ENCODE measurements at regions of chr2 and their contacts with region 1.

Region 1: DNA sequence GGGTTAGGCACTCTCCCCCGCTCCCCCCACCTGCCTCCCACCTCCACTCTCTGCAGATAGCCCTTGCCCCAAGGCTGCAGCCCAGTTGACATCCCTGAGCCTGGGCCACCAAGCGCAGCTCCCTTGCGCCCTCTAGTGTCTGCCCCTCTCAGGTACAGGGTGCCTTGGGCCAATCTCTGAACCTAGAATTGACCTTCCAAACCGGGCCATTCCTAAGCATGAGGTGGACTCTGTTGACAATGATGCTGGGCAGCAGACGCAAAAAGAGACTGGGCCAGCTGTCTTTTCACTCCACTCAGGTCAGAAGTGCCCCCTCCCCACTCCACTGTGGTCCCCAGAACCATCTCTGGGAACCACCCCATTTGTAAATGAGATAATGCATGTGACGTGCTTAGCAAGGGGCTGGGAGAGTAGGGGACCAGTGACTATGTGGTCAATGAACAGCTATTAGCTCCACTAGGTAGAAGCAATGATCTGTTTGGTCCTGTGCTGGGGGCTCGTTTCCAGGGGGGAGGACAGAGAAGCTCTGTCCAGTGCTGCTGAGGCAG is 43.3 kb upstream of the PLB1 start:
- DNase-seq: peak; percentile 91
- H3K4me3 Mint-ChIP-seq: no peak overlapping the region
- H3K27ac Mint-ChIP-seq: no peak overlapping the region
- H3K4me1 Mint-ChIP-seq: peaks cover 36% of the 10 kb centered on the region
- H3K27me3 Mint-ChIP-seq: no peaks in the 10 kb centered on the region

Region 2: DNA sequence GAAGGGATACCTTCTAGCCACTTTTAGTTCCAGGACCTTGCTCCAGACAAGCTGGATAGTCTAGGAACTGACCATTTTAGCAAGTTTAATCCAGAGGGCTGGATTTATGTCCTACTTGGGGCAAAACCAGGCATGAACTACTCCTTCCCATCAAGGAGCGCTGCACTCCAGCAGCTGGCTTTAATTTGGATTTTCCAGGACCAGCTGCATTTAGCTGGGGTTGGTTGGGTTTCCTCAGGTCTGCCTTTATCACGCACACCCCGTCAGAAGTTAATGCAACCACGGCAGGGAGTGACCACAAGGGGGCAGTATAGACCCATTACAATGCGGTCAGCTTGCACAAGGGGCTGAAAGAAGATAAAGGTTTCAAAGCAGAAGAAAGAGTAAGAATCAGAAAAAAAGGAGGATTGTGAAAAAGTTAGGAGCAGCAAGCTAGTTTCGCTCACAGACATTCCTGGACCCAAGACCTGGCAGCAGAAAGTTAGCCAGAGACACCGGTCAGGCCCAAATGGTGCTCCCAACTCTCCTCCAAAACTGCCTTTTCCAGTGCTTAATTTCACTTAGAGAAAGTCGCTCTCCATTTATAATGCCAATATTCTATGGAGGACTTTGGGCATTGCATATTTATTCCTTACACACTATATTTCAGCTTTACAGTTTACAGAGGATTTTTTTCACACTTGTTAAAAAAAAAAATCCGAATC is 748.8 kb before region 1 on chr2:
- CTCF ChIA-PET with region 1: interaction called, 10 read pairs
- intact Hi-C with region 1: loop called (anchors 1 kb)
- DNase-seq: peak; percentile 95
- H3K4me3 Mint-ChIP-seq: no peak overlapping the region
- H3K27ac Mint-ChIP-seq: no peak overlapping the region
- H3K4me1 Mint-ChIP-seq: peaks cover 13% of the 10 kb centered on the region
- H3K27me3 Mint-ChIP-seq: no peaks in the 10 kb centered on the region

Region 3: GRCh38 chr2:27754138-27754588 is 698.4 kb before region 1 on chr2:
- CTCF ChIA-PET with region 1: interaction called, 11 read pairs
- intact Hi-C with region 1: loop called (anchors 1 kb)
- DNase-seq: peak; percentile 92
- H3K4me3 Mint-ChIP-seq: no peak overlapping the region
- H3K27ac Mint-ChIP-seq: no peak overlapping the region
- H3K4me1 Mint-ChIP-seq: no peaks in the 10 kb centered on the region
- H3K27me3 Mint-ChIP-seq: peaks cover 2% of the 10 kb centered on the region

Region 4: GRCh38 chr2:27807476-27807875 is 645.1 kb before region 1 on chr2:
- CTCF ChIA-PET with region 1: no interaction called
- intact Hi-C with region 1: loop called (anchors 2 kb)
- DNase-seq: peak; percentile 49
- H3K4me3 Mint-ChIP-seq: no peak overlapping the region
- H3K27ac Mint-ChIP-seq: no peak overlapping the region
- H3K4me1 Mint-ChIP-seq: peaks cover 1% of the 10 kb centered on the region
- H3K27me3 Mint-ChIP-seq: no peaks in the 10 kb centered on the region

Region 5: GRCh38 chr2:28342081-28342967 is 110.3 kb before region 1 on chr2:
- CTCF ChIA-PET with region 1: no interaction called
- intact Hi-C with region 1: loop called (anchors 5 kb)
- DNase-seq: no peak
- H3K4me3 Mint-ChIP-seq: no peak overlapping the region
- H3K27ac Mint-ChIP-seq: no peak overlapping the region
- H3K4me1 Mint-ChIP-seq: peaks cover under 1% of the 10 kb centered on the region
- H3K27me3 Mint-ChIP-seq: no peaks in the 10 kb centered on the region

Region 6: DNA sequence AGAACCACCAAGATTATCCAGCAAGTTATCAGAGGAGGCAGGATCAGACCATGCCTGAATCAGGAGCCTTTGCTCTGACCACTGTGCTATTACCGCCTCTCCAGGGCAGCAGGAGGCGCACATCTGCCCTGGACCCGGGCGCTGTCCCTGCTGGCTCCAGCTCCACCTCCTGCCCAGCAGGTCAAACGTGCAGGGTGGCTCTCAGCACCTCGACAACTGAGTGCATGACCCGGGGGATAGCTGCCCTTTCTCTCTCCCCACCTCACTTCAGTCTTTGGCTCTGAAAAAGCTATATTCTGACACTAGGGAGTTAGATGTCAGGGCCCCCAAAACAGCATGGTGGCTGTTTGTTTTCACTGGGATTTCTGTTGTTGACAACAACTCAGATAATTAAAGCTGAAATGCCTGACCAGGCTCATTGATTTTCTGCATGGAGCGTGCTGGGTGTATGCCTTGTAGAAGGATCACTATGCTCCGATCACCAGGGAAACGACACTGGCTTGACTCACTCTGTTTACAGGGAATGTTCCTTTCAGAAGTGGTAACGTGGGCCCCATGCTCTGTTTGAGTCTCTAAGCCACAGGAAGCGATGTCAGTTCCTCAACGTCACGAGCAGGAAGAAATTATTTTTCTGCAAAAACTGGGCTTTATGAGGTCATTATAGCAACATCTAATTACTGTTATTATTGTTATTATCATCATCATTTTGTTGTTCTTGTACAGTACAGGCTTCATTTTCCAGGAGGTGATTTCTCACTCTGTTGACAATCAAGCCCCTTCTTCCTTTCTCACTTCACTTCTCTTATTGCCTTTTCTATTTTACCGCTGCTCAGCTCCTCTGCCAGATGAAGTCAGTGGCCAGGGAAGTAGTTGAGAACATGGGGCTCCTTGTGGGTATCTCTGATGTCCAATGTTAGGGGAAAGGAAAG is 168.8 kb after region 1 on chr2:
- CTCF ChIA-PET with region 1: no interaction called
- intact Hi-C with region 1: loop called (anchors 2 kb)
- DNase-seq: peak; percentile 91
- H3K4me3 Mint-ChIP-seq: peak overlapping the region; percentile 41
- H3K27ac Mint-ChIP-seq: peak overlapping the region; percentile 94
- H3K4me1 Mint-ChIP-seq: peaks cover 92% of the 10 kb centered on the region
- H3K27me3 Mint-ChIP-seq: no peaks in the 10 kb centered on the region

Measured in activated naive CD4-positive, alpha-beta T cell treated with anti-CD3 and anti-CD28 coated beads for 36 hours (primary cell).